Heart left ventricle (tissue), 16 donors: ENCODE measurements at regions of chr10 and their contacts with region 1.

Region 1: DNA sequence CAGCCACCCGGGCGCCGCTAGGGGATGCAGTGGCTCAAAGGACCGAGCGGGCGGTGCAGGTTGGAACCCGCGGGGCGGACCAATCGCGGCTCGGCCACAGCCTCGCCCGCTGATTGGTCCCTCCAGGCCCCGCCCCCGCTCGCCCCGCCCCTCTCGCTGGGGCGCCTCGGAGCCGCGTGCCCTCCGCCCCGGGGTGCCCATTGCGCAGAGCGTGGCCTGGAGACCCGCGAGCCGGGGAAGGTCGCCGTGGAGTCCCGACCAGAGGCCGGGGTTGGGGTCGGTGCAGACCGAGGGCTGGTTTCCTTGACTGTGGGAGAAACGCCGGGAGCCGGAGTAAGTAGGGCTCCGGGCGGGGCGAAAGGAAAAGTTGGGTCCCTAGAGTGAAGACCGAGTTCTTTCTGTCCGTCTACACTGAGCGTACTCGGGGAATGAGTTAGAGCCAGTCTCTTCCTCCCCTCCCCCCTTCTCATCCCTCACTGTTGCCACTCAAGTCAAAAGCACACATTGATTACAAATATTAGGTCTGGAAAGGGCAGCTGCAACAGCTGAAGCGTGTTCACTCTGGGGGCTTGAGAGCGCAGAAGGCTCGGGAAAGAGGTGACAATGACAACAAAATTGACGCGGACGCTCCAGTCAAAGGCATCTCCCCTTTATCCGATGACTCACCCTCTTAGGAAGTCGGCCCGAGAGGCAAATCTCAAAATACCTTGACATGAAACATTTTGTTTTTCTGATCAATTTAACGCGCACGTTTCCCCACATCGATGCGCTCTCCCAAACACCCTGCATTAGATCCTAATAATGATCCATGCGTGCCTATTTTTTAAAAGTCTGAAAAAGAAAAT is 820 bp upstream of the GATA3 start:
- DNase-seq: peak; percentile 82 to 92 (median 85)
- ATAC-seq: peak; percentile 76 to 93 (median 91)
- H3K4me3 ChIP-seq: peak overlapping the region; percentile 43 to 75 (median 59)
- H3K27ac ChIP-seq: peak overlapping the region in 11 of 12 donors; percentile 12 to 86 (median 48)
- H3K4me1 ChIP-seq: peaks cover 4 to 73% (median 47%) of the 10 kb centered on the region in 12 donors
- H3K27me3 ChIP-seq: peaks cover 41 to 96% (median 88%) of the 10 kb centered on the region in 9 donors
- CTCF ChIP-seq: peak in 10 of 12 donors; percentile 71 to 88 (median 81)
- POLR2A ChIP-seq: peak in 1 of 2 donors; percentile 23

Region 2: DNA sequence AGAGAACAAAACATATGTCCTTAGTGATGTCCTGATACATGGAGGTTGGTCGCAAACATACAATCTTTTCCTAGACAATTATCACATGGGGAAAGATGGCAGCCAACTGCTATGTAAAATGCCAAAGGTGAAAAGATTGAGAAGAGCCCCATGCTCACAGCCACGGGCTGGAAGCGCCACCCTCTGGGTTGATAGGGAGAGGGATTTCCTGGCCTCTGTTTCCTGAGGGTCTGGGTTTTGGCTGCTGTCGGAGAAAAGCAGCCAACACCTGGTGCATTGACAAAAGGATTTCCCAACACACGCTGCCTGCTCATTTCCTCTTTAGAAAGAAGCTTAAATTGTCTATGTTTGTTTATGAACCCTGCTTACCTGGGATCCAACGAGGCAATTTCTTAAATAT is 430.7 kb before region 1 on chr10:
- intact Hi-C with region 1: no loop called
- DNase-seq: no peak
- ATAC-seq: peak in 2 of 4 donors; percentile 42 to 77
- H3K4me3 ChIP-seq: no peak overlapping the region
- H3K27ac ChIP-seq: no peak overlapping the region
- H3K4me1 ChIP-seq: peaks cover 0 to 17% (median 5%) of the 10 kb centered on the region in 12 donors
- H3K27me3 ChIP-seq: no peaks in the 10 kb centered on the region
- CTCF ChIP-seq: peak in 10 of 12 donors; percentile 13 to 60 (median 42)
- POLR2A ChIP-seq: no peak

Region 3: GRCh38 chr10:7813481-7813880 is 240.2 kb before region 1 on chr10:
- intact Hi-C with region 1: no loop called
- DNase-seq: no peak
- ATAC-seq: no peak
- H3K4me3 ChIP-seq: no peak overlapping the region
- H3K27ac ChIP-seq: no peak overlapping the region
- H3K4me1 ChIP-seq: peaks cover 0 to 8% (median 1%) of the 10 kb centered on the region in 12 donors
- H3K27me3 ChIP-seq: no peaks in the 10 kb centered on the region
- CTCF ChIP-seq: no peak
- POLR2A ChIP-seq: no peak

Region 4: GRCh38 chr10:7886025-7886424 is 167.6 kb before region 1 on chr10:
- intact Hi-C with region 1: no loop called
- DNase-seq: no peak
- ATAC-seq: no peak
- H3K4me3 ChIP-seq: no peak overlapping the region
- H3K27ac ChIP-seq: no peak overlapping the region
- H3K4me1 ChIP-seq: peaks cover 0 to 10% (median 0%) of the 10 kb centered on the region in 12 donors
- H3K27me3 ChIP-seq: no peaks in the 10 kb centered on the region
- CTCF ChIP-seq: no peak
- POLR2A ChIP-seq: no peak

Region 5: DNA sequence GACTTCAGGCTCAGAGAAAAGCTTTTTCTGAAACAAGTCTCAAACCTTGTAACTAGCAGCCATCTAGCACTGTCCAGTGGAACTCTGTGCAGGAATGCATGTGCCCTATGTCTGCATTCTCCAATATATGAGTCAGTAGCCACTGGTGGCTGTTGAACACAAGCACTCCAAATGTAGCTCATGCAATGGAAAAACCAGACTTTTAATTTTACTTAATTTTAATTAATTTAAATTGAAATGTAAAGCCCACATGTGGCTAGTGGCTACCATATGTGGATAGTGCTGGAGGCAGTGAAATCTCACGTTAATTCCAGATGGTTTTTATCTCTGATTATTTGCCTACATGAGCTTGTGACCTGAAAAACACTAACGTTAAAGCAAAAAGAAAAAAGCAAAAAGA is 225.9 kb after region 1 on chr10:
- intact Hi-C with region 1: loop called in 1 of 10 experiments (anchors 10 kb)
- DNase-seq: no peak
- ATAC-seq: no peak
- H3K4me3 ChIP-seq: no peak overlapping the region
- H3K27ac ChIP-seq: no peak overlapping the region
- H3K4me1 ChIP-seq: no peaks in the 10 kb centered on the region
- H3K27me3 ChIP-seq: peaks cover 0 to 7% (median 0%) of the 10 kb centered on the region in 9 donors
- CTCF ChIP-seq: no peak
- POLR2A ChIP-seq: no peak

Region 6: DNA sequence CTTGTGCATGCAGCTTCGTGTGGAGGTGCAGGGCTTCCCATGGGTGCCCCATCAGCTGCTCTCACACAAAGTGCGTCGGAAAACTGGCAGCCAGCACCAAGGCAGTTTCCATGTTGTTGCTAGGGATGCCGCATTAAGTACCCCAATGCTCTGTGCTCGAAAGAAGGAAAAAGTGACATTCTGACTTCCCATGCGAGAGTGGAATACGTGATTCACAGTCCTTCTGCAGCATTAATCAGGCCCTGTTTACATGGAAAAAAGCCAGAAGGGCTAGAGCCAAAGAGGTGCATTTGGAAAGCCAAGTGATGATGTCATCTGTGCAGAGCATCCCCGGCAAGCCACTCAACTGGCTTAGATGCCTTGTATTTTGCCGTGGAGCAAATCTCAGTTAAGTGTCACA is 259.1 kb after region 1 on chr10:
- intact Hi-C with region 1: no loop called
- DNase-seq: no peak
- ATAC-seq: peak in 1 of 4 donors; percentile 60
- H3K4me3 ChIP-seq: no peak overlapping the region
- H3K27ac ChIP-seq: no peak overlapping the region
- H3K4me1 ChIP-seq: no peaks in the 10 kb centered on the region
- H3K27me3 ChIP-seq: no peaks in the 10 kb centered on the region
- CTCF ChIP-seq: no peak
- POLR2A ChIP-seq: no peak

Region 7: DNA sequence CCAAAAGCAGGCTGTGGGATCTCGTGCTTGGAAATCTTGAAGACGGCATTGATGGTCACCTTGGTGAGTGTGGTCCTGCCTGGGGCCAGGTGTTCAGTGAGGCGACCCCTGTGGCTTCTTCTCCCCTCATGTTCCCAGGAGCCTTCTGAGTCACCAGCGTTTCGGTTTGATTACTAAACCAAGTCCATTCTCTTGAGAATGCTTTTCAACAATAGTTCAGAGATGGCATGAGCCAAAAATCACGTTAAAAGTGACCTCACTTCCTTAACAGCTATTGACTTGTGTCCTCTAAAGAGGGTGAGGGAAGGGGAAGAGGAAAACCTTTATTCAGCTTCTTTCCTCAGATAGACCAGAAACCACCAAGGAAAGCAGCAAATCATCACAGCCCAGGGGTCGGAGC is 316.0 kb after region 1 on chr10:
- intact Hi-C with region 1: loop called in 4 of 10 experiments (anchors 10 kb)
- DNase-seq: peak in 2 of 5 donors; percentile 26 to 31
- ATAC-seq: peak; percentile 51 to 80 (median 61)
- H3K4me3 ChIP-seq: no peak overlapping the region
- H3K27ac ChIP-seq: peak overlapping the region in 10 of 12 donors; percentile 41 to 85 (median 66)
- H3K4me1 ChIP-seq: peaks cover 0 to 11% (median 0%) of the 10 kb centered on the region in 12 donors
- H3K27me3 ChIP-seq: no peaks in the 10 kb centered on the region
- CTCF ChIP-seq: no peak
- POLR2A ChIP-seq: peak in 1 of 2 donors; percentile 33

Region 8: DNA sequence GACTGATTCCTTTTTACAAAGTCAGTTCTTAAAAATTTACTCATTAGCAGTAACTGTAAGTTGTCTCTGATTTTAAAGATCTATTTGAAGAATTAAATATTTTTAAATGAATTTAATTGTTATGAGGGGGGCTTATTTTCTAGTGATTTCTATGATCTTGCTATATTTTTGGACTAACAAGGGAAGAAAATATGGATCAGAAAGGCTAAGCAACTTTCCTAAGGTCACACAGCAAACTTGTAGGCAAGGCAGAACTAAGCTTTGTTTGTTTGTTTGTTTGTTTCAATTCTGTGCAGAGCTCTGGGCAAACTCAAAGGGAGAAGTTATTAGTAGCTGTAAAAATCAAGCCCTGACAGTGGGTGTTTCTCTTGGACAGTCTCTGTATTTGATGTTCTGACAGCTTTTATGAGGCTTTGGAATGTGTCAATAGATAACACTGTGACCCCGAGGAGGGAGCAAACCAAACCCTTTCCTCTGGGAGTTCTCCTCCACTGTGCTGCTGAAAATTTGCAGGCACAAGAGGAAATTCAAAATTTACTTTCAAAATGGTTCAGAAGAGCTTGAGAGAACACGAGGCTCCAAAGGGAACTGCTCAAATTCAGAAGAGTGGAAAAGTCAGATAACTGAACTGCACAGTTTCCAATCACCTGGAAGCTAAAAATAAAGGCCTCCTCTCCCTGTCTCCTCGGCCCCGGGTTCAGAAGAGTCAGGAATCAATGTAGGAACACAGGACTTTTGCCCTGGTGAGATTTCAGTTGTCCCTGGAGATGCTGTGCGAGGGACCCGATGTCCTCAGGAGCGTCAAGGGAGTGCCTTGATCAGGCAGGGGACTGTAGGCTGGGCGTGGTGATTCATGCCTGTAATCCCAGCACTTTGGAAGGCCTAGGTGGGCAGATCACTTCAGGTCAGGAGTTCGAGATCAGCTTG is 326.5 kb after region 1 on chr10:
- intact Hi-C with region 1: loop called in 6 of 10 experiments (anchors 5 to 10 kb)
- DNase-seq: no peak
- ATAC-seq: peak in 2 of 4 donors; percentile 26 to 72
- H3K4me3 ChIP-seq: no peak overlapping the region
- H3K27ac ChIP-seq: peak overlapping the region in 7 of 12 donors; percentile 5 to 56 (median 48)
- H3K4me1 ChIP-seq: peaks cover 0 to 29% (median 8%) of the 10 kb centered on the region in 12 donors
- H3K27me3 ChIP-seq: peaks cover 0 to 7% (median 0%) of the 10 kb centered on the region in 9 donors
- CTCF ChIP-seq: no peak
- POLR2A ChIP-seq: no peak

Region 9: GRCh38 chr10:8444630-8445029 is 391.0 kb after region 1 on chr10:
- intact Hi-C with region 1: loop called in 1 of 10 experiments (anchors 10 kb)
- DNase-seq: no peak
- ATAC-seq: no peak
- H3K4me3 ChIP-seq: no peak overlapping the region
- H3K27ac ChIP-seq: no peak overlapping the region
- H3K4me1 ChIP-seq: no peaks in the 10 kb centered on the region
- H3K27me3 ChIP-seq: peaks cover 0 to 41% (median 5%) of the 10 kb centered on the region in 9 donors
- CTCF ChIP-seq: peak in 6 of 12 donors; percentile 6 to 34 (median 12)
- POLR2A ChIP-seq: no peak

Region 10: GRCh38 chr10:8473205-8473604 is 419.5 kb after region 1 on chr10:
- intact Hi-C with region 1: loop called in 2 of 10 experiments (anchors 5 to 10 kb)
- DNase-seq: no peak
- ATAC-seq: no peak
- H3K4me3 ChIP-seq: no peak overlapping the region
- H3K27ac ChIP-seq: no peak overlapping the region
- H3K4me1 ChIP-seq: no peaks in the 10 kb centered on the region
- H3K27me3 ChIP-seq: peaks cover 0 to 5% (median 0%) of the 10 kb centered on the region in 9 donors
- CTCF ChIP-seq: peak in 7 of 12 donors; percentile 22 to 41 (median 26)
- POLR2A ChIP-seq: no peak